ENCODE measurements at regions of chrX and their contacts with region 1.

Region 1: GRCh38 chrX:76172325-76172893 is 453 bp upstream of the PBDC1 start:
- DNase-seq: peak in 1 of 2 experiments; percentile 43
- H3K4me3 ChIP-seq: peak overlapping the region; percentile 70 to 91 (median 82)
- H3K27ac ChIP-seq: peak overlapping the region; percentile 86
- H3K4me1 ChIP-seq: no peaks in the 10 kb centered on the region; a peak in 1 of 7 replicates
- H3K27me3 ChIP-seq: no peaks in the 10 kb centered on the region
- CTCF ChIP-seq: no peak
- EP300 ChIP-seq: no peak
- POLR2A ChIP-seq: no peak
- RAD21 ChIP-seq: no peak

Region 2: GRCh38 chrX:76159453-76159852 is 13.0 kb before region 1 on chrX:
- CTCF ChIA-PET with region 1: interaction called, 3 read pairs
- POLR2A ChIA-PET with region 1: interaction called, 11 read pairs
- DNase-seq: no peak
- H3K4me3 ChIP-seq: no peak overlapping the region
- H3K27ac ChIP-seq: no peak overlapping the region
- H3K4me1 ChIP-seq: peaks cover 0 to 5% (median 0%) of the 10 kb centered on the region in 4 experiments; a peak in 1 of 7 replicates
- H3K27me3 ChIP-seq: no peaks in the 10 kb centered on the region
- CTCF ChIP-seq: no peak
- EP300 ChIP-seq: no peak
- POLR2A ChIP-seq: no peak
- RAD21 ChIP-seq: no peak

Region 3: GRCh38 chrX:76183289-76184049 is 11.1 kb after region 1 on chrX:
- CTCF ChIA-PET with region 1: interaction called, 3 read pairs
- POLR2A ChIA-PET with region 1: interaction called, 19 read pairs
- DNase-seq: no peak
- H3K4me3 ChIP-seq: no peak overlapping the region
- H3K27ac ChIP-seq: no peak overlapping the region
- H3K4me1 ChIP-seq: no peaks in the 10 kb centered on the region
- H3K27me3 ChIP-seq: no peaks in the 10 kb centered on the region
- CTCF ChIP-seq: no peak
- EP300 ChIP-seq: no peak
- POLR2A ChIP-seq: no peak
- RAD21 ChIP-seq: no peak

Measured in H1 (cell line).